ENCODE measurements at regions of chr20 and their contacts with region 1.

Region 1: DNA sequence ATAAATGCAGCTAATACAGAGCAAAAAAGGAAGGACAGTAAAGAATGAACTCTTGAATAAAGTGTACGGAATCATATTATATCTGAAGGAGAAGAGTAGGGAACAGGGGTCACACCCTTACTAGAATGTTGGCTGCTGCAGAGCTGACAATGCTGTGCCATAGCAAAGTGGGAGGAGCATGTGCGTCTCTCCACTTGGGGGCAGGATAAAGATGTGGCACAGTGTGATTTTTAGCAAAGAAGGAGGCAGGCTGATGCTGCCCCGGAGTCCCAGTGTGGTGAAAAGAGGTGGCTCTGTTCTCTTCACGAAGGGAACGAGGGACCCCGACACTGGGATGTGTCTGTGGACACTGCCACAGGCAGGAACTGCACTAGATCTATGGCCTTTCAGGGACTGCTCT is 67.5 kb downstream of the INSM1 start:
- DNase-seq: no peak
- H3K4me3 ChIP-seq: no peak overlapping the region
- H3K27ac ChIP-seq: no peak overlapping the region
- H3K4me1 ChIP-seq: peaks cover 6% of the 10 kb centered on the region
- H3K27me3 ChIP-seq: no peaks in the 10 kb centered on the region
- CTCF ChIP-seq: peak; percentile 28

Region 2: DNA sequence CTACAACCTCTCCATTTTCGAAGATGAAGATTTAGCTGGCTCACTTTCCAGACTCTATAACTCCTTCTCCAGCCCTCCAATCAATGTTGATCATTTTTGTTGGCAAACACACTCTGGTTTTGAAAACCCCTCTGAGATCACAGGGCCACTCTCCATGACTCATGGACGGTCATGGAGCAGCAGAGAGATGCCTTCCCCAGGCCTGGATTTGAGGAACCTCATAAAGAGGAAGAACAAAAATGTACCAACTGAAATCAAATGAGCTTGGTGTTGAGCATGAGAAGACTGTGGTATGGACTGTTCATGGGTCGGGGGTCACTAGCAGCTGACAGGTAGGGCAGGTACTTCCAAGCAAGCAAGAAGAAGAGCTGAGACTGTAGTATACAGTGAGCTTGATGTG is 180.4 kb before region 1 on chr20:
- intact Hi-C with region 1: no loop called
- DNase-seq: no peak
- H3K4me3 ChIP-seq: no peak overlapping the region
- H3K27ac ChIP-seq: no peak overlapping the region
- H3K4me1 ChIP-seq: no peaks in the 10 kb centered on the region
- H3K27me3 ChIP-seq: no peaks in the 10 kb centered on the region
- CTCF ChIP-seq: no peak

Region 3: GRCh38 chr20:20369250-20370093 is 66.0 kb before region 1 on chr20:
- intact Hi-C with region 1: loop called (anchors 10 kb)
- DNase-seq: no peak
- H3K4me3 ChIP-seq: peak overlapping the region; percentile 52
- H3K27ac ChIP-seq: no peak overlapping the region
- H3K4me1 ChIP-seq: peaks cover 27% of the 10 kb centered on the region
- H3K27me3 ChIP-seq: peaks cover 99% of the 10 kb centered on the region
- CTCF ChIP-seq: no peak

Measured in left ventricle myocardium inferior (tissue), 1 donor.